ENCODE measurements at regions of chr1 and their contacts with region 1.

Region 1: DNA sequence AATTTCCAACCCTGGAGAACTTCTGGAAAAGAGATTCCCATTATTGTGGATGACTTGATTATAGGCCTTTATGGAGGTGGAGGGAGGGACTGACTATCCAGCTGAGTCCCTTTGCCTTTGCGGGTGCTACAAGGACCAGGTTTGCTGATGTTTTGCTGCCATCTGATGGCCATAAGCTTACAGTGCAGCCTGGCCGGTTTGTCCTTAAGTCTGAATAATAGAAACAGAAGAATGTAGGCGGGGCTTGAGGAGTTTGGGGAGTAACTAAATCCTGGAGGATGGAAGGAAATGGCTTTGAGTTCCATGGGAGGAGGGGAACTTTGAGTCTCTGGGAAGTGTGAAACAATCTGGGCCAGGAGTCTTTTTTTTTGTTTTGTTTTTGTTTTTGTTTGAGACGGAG is 55.7 kb upstream of the CD1D start:
- DNase-seq: peak; percentile 73 to 97
- H3K4me3 ChIP-seq: peak overlapping the region in 1 of 2 donors; percentile 11
- H3K27ac ChIP-seq: no peak overlapping the region
- H3K4me1 ChIP-seq: no peaks in the 10 kb centered on the region
- H3K27me3 ChIP-seq: no peaks in the 10 kb centered on the region
- CTCF ChIP-seq: peak; percentile 92 to 93 (median 93)

Region 2: DNA sequence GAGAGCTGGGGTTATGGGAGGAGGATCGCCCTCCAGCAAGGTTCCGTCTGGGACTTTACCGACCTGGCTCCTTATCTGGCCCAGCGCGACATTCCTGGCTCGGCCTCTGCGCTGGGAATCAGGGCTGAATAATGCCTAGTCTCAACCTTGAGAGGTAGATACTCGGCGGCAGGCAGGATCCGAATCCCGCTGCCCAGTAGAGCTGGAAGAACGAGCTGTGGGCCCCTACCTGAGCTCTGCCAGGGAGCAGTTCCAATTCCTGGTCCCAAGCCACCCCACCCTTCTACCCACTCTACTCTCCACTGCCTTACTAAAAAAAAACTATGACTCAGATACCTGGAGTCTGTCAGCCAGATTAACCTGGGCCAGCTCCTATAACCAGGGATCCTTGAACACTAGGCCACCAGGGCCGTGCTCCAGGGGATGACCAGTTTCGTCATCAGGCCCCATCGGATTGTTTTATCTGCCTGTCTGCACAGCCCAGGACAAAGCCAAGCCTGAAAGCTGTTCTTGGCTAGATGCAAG is 1702.3 kb before region 1 on chr1:
- intact Hi-C with region 1: no loop called
- DNase-seq: no peak
- H3K4me3 ChIP-seq: no peak overlapping the region
- H3K27ac ChIP-seq: no peak overlapping the region
- H3K4me1 ChIP-seq: peaks cover 15 to 16% of the 10 kb centered on the region in 2 donors
- H3K27me3 ChIP-seq: peaks cover 27% of the 10 kb centered on the region
- CTCF ChIP-seq: no peak

Region 3: GRCh38 chr1:157580179-157580827 is 544.7 kb before region 1 on chr1:
- intact Hi-C with region 1: loop called (anchors 10 kb)
- DNase-seq: no peak
- H3K4me3 ChIP-seq: no peak overlapping the region
- H3K27ac ChIP-seq: no peak overlapping the region
- H3K4me1 ChIP-seq: no peaks in the 10 kb centered on the region
- H3K27me3 ChIP-seq: no peaks in the 10 kb centered on the region
- CTCF ChIP-seq: peak; percentile 27 to 59 (median 37)

Region 4: GRCh38 chr1:157963713-157964112 is 161.3 kb before region 1 on chr1:
- intact Hi-C with region 1: loop called (anchors 1 kb)
- DNase-seq: peak in 1 of 2 donors; percentile 79
- H3K4me3 ChIP-seq: no peak overlapping the region
- H3K27ac ChIP-seq: no peak overlapping the region
- H3K4me1 ChIP-seq: peaks cover 4% of the 10 kb centered on the region in 2 donors
- H3K27me3 ChIP-seq: no peaks in the 10 kb centered on the region
- CTCF ChIP-seq: peak; percentile 87 to 95 (median 93)

Region 5: GRCh38 chr1:158035976-158036583 is 88.9 kb before region 1 on chr1:
- intact Hi-C with region 1: loop called (anchors 5 kb)
- DNase-seq: no peak
- H3K4me3 ChIP-seq: no peak overlapping the region
- H3K27ac ChIP-seq: peak overlapping the region; percentile 15 to 37
- H3K4me1 ChIP-seq: peaks cover 6 to 23% of the 10 kb centered on the region in 2 donors
- H3K27me3 ChIP-seq: no peaks in the 10 kb centered on the region
- CTCF ChIP-seq: peak; percentile 62 to 82 (median 65)

Region 6: DNA sequence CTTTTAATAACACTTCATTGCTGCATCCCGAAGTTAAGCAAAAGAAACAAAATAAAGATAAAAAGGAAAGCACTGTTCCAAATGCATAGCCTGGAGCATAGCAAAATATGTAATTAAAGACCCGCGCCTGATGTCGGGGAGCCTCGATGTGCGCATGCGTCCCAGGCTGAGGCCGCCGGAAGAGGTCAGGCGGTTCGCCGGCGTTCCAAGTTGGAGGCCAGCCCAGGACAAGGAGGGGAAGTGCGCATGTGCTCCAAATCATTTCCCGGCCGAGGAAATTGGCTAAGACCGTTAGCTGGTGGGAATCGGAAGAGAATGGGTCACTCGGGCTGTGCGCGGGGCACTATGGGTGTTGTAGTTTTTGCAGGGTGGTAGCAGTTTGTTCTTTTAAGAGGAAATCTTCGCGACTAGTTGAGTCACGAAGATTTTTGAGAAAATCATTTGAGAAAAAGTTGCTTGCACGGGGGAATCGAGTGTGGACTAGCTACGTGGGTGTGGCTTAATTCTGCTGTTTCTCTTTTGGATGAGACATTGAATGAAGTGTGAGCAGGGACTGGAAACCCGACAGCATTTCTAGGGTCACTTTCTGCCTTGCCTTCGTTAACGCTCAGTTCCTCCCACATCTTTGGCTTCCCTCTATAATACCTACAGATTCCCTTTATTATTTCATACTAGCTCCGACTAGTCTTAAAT is 24.7 kb after region 1 on chr1:
- intact Hi-C with region 1: loop called (anchors 1 kb)
- DNase-seq: peak; percentile 82 to 98
- H3K4me3 ChIP-seq: peak overlapping the region; percentile 56
- H3K27ac ChIP-seq: peak overlapping the region; percentile 70 to 72
- H3K4me1 ChIP-seq: peaks cover 0 to 8% of the 10 kb centered on the region in 2 donors
- H3K27me3 ChIP-seq: no peaks in the 10 kb centered on the region
- CTCF ChIP-seq: no peak

Region 7: GRCh38 chr1:158407092-158407491 is 282.1 kb after region 1 on chr1:
- intact Hi-C with region 1: no loop called
- DNase-seq: no peak
- H3K4me3 ChIP-seq: no peak overlapping the region
- H3K27ac ChIP-seq: no peak overlapping the region
- H3K4me1 ChIP-seq: no peaks in the 10 kb centered on the region
- H3K27me3 ChIP-seq: no peaks in the 10 kb centered on the region
- CTCF ChIP-seq: no peak

Measured in ascending aorta (tissue), 2 donors.